Dorsolateral prefrontal cortex (tissue), 120 donors: ENCODE measurements at regions of chr2 and their contacts with region 1.

Region 1: GRCh38 chr2:39513641-39514094 is 76.6 kb upstream of the MAP4K3 start:
- DNase-seq: peak in 6 of 10 donors; percentile 37 to 70 (median 41)
- H3K4me3 ChIP-seq: no peak overlapping the region
- H3K27ac ChIP-seq: peak overlapping the region in 48 of 59 donors; percentile 10 to 86 (median 58)
- H3K27me3 ChIP-seq: no peaks in the 10 kb centered on the region
- CTCF ChIP-seq: peak; percentile 17 to 81 (median 66)

Region 2: DNA sequence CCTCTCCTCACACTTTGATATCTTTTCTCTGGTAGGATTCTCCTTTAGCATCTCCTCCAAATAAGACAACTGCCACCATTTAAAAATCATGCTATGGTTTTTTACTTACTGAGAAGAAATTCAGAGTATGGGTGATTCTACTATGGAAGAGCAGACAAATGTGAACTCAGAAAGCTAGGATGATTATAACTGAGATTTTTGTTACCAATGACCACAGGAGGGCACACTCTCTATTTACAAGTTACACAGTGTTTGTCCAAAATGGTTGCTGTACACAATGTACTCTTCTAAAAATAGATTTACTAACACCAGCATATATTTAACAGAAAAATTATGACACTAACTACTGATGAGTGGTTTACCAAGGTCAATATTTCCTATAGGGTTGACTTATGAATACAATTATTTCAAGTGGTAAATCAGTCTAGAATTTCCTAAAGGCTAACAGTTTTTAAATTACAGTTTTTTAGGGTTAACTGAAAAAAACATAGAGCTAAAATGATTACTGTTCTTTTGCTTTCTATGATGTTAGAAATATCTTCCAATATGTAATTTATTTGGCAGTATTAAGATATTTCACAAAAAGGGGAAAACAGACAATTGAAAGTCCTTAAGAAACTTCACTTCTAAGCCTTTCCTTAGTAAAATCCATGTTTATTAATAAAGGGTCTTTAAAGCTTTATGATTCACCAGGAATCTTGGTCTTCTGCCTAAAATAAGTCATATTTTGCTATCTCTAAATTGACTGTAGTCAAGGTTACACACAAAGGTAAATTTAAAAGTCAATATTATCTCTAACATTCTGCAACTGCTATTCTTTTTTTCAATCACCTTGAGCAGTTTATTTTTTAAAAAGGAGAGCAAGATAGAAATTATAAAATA is 133.8 kb before region 1 on chr2:
- intact Hi-C with region 1: loop called in 1 of 2 experiments (anchors 10 kb)
- DNase-seq: no peak
- H3K4me3 ChIP-seq: peak overlapping the region in 8 of 59 donors; percentile 1 to 31 (median 14)
- H3K27ac ChIP-seq: peak overlapping the region in 56 of 59 donors; percentile 0 to 83 (median 62)
- H3K27me3 ChIP-seq: no peaks in the 10 kb centered on the region
- CTCF ChIP-seq: peak; percentile 55 to 88 (median 74)

Region 3: DNA sequence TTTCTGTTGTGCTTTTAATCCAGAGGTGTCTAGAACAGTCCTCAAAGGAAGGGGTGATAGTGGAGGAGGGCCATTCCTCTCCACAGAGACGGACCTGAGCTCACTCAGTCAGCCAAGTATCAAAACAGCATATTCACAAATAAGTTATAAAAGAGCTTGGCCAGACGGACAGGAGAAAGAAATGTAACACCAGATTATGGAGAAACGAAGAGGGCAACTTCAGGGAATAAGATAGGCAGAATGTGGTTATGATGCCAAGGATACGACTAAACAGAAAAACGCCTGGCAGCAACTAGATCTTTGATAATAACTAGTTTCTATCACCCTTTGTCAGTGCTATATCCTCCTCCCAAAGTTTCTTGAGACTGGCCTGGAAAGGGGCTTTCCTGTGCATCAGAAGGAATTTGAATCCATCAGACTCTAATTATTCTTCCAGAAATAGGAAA is 119.1 kb before region 1 on chr2:
- intact Hi-C with region 1: loop called in 1 of 2 experiments (anchors 5 kb)
- DNase-seq: no peak
- H3K4me3 ChIP-seq: no peak overlapping the region
- H3K27ac ChIP-seq: no peak overlapping the region
- H3K27me3 ChIP-seq: no peaks in the 10 kb centered on the region
- CTCF ChIP-seq: no peak

Region 4: GRCh38 chr2:39436592-39437510 is 76.8 kb before region 1 on chr2 and contains the start of gene MAP4K3:
- intact Hi-C with region 1: loop called (anchors 2 to 10 kb)
- DNase-seq: peak; percentile 75 to 94 (median 88)
- H3K4me3 ChIP-seq: peak within 1 kb of the TSS; percentile 54 to 99 (median 92)
- H3K27ac ChIP-seq: peak within 1 kb of the TSS; percentile 79 to 99 (median 95)
- H3K27me3 ChIP-seq: no peaks in the 10 kb centered on the region
- CTCF ChIP-seq: peak in 14 of 56 donors; percentile 1 to 44 (median 16)
- total RNA-seq, gene MAP4K3: 50.1 to 100 (median 72.2) TPM

Region 5: GRCh38 chr2:39665811-39666490 is 152.3 kb after region 1 on chr2 and contains the start of gene TMEM178A:
- intact Hi-C with region 1: loop called in 1 of 2 experiments (anchors 10 kb)
- DNase-seq: peak in 2 of 10 donors; percentile 41 to 51
- H3K4me3 ChIP-seq: peak within 1 kb of the TSS; percentile 37 to 85 (median 69)
- H3K27ac ChIP-seq: peak within 1 kb of the TSS in 58 of 59 donors; percentile 24 to 95 (median 83)
- H3K27me3 ChIP-seq: peaks cover 0 to 43% (median 4%) of the 10 kb centered on the region in 45 donors
- CTCF ChIP-seq: peak in 1 of 56 donors; percentile 4
- total RNA-seq, gene TMEM178A: 41.1 to 132 (median 86.4) TPM

Region 6: DNA sequence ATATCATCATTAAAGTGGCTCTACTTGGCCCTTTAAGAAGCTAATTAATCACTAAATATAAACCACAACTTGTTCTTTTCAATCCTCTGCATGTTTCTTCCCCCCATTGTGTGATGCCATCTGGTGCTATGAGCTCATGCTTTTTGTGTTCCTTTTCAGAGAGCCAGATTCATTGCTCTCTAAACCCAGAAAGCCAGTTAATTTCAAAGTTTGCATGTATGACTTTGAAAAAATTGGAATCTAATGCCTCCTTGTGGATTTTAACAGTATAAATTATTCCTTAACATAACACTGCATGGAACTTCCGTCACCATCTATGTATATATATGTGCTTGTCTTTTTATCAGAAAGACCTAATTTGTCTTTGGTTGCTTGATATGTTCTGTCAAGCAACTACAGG is 183.2 kb after region 1 on chr2:
- intact Hi-C with region 1: loop called (anchors 1 to 10 kb)
- DNase-seq: peak in 2 of 10 donors; percentile 48 to 65
- H3K4me3 ChIP-seq: peak overlapping the region in 11 of 59 donors; percentile 0 to 25 (median 6)
- H3K27ac ChIP-seq: peak overlapping the region in 56 of 59 donors; percentile 6 to 95 (median 65)
- H3K27me3 ChIP-seq: no peaks in the 10 kb centered on the region
- CTCF ChIP-seq: peak in 55 of 56 donors; percentile 29 to 85 (median 63)

Region 7: GRCh38 chr2:39730685-39731302 is 217.1 kb after region 1 on chr2:
- intact Hi-C with region 1: loop called (anchors 5 to 10 kb)
- DNase-seq: no peak
- H3K4me3 ChIP-seq: no peak overlapping the region
- H3K27ac ChIP-seq: peak overlapping the region in 2 of 59 donors; percentile 14 to 16
- H3K27me3 ChIP-seq: no peaks in the 10 kb centered on the region
- CTCF ChIP-seq: peak in 55 of 56 donors; percentile 23 to 77 (median 61)